GM12878 (cell line): ENCODE measurements at regions of chr5 and their contacts with region 1.

Region 1: DNA sequence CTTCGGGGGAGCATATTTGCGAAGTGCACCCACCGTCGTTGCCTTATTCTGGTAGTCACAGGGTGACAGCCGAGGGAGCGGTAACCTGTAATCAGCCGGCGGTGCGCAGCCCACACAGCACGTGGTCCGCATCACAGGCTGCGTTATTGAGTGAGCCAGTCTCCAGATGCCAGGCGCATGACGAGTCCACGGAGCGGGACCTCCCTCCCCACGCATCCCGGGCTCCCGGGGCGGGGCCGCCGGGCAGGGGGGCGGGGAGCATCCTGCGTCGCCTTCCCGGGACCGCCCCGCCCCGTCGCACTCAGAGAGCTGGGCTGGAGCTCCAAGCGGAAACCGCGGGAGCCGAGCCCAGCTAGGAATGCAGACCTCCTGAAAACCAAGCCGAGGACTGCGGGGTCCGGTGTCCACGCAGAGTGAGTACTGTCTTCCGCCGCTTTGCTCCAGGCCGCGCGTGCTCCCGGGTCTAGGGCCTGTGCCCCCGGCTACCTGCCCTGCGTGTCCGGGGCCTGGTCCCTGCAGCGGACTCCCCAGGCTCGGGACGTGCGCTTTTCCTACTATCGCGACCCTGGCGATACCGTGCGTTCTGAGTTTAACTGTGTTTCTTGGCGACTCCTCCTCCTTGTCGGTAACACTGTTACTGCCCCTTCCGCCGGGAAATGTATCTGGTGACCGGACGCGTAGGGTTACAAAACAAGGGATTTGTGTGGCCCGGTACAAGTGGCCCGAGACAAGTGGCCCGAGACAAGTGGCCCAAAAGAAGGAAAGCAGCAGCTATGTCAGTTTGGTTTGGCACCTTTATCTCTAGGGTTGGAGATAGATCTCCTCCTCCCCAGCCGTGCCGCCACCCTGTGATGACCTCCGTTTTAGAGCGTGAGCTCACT is 40.6 kb downstream of the CAST start:
- DNase-seq: no peak
- ATAC-seq: peak; percentile 85
- H3K4me3 ChIP-seq: peak overlapping the region; percentile 78
- H3K27ac ChIP-seq: peak overlapping the region; percentile 60
- H3K4me1 ChIP-seq: peaks cover 8% of the 10 kb centered on the region; the same call in 1 of the 2 replicates
- H3K27me3 ChIP-seq: no peaks in the 10 kb centered on the region
- CTCF ChIP-seq: no peak
- EP300 ChIP-seq: 0 out of 4 replicates have a peak, but pooled peaks of 1 of the 2 experiments have one; percentile 14
- POLR2A ChIP-seq: peak; percentile 65
- RAD21 ChIP-seq: no peak

Region 2: GRCh38 chr5:96662725-96663513 is 39.8 kb before region 1 on chr5:
- CTCF ChIA-PET with region 1: no interaction called
- POLR2A ChIA-PET with region 1: interaction called, 4 read pairs
- RAD21 ChIA-PET with region 1: interaction called, 14 read pairs
- SMC1A ChIA-PET with region 1: interaction called, 4 read pairs
- in situ Hi-C with region 1: no loop called
- intact Hi-C with region 1: no loop called
- DNase-seq: peak; percentile 50
- ATAC-seq: peak; percentile 87
- H3K4me3 ChIP-seq: peak overlapping the region; percentile 75
- H3K27ac ChIP-seq: peak overlapping the region; percentile 70
- H3K4me1 ChIP-seq: peaks cover 6% of the 10 kb centered on the region
- H3K27me3 ChIP-seq: no peaks in the 10 kb centered on the region; a peak in 1 of 4 replicates
- CTCF ChIP-seq: no peak
- EP300 ChIP-seq: no peak
- POLR2A ChIP-seq: peak; percentile 71
- RAD21 ChIP-seq: no peak

Region 3: GRCh38 chr5:96978812-96979449 is 276.2 kb after region 1 on chr5:
- CTCF ChIA-PET with region 1: no interaction called
- POLR2A ChIA-PET with region 1: no interaction called
- RAD21 ChIA-PET with region 1: no interaction called
- SMC1A ChIA-PET with region 1: no interaction called
- in situ Hi-C with region 1: no loop called
- intact Hi-C with region 1: no loop called
- DNase-seq: no peak
- ATAC-seq: no peak
- H3K4me3 ChIP-seq: no peak overlapping the region
- H3K27ac ChIP-seq: no peak overlapping the region
- H3K4me1 ChIP-seq: no peaks in the 10 kb centered on the region
- H3K27me3 ChIP-seq: no peaks in the 10 kb centered on the region
- CTCF ChIP-seq: no peak
- EP300 ChIP-seq: no peak
- POLR2A ChIP-seq: no peak
- RAD21 ChIP-seq: no peak